ENCODE measurements at regions of chr5 and their contacts with region 1.

Region 1: GRCh38 chr5:64074533-64074932 is 91.1 kb upstream of the RNF180 start:
- DNase-seq: no peak
- H3K4me3 Mint-ChIP-seq: no peak overlapping the region
- H3K27ac Mint-ChIP-seq: no peak overlapping the region
- H3K4me1 Mint-ChIP-seq: no peaks in the 10 kb centered on the region
- H3K27me3 Mint-ChIP-seq: no peaks in the 10 kb centered on the region

Region 2: GRCh38 chr5:64063518-64063917 is 11.0 kb before region 1 on chr5:
- intact Hi-C with region 1: no loop called
- DNase-seq: no peak
- H3K4me3 Mint-ChIP-seq: no peak overlapping the region
- H3K27ac Mint-ChIP-seq: no peak overlapping the region
- H3K4me1 Mint-ChIP-seq: no peaks in the 10 kb centered on the region
- H3K27me3 Mint-ChIP-seq: no peaks in the 10 kb centered on the region

Region 3: GRCh38 chr5:64108675-64109074 is 34.1 kb after region 1 on chr5:
- intact Hi-C with region 1: no loop called
- DNase-seq: no peak
- H3K4me3 Mint-ChIP-seq: no peak overlapping the region
- H3K27ac Mint-ChIP-seq: no peak overlapping the region
- H3K4me1 Mint-ChIP-seq: no peaks in the 10 kb centered on the region
- H3K27me3 Mint-ChIP-seq: no peaks in the 10 kb centered on the region

Region 4: DNA sequence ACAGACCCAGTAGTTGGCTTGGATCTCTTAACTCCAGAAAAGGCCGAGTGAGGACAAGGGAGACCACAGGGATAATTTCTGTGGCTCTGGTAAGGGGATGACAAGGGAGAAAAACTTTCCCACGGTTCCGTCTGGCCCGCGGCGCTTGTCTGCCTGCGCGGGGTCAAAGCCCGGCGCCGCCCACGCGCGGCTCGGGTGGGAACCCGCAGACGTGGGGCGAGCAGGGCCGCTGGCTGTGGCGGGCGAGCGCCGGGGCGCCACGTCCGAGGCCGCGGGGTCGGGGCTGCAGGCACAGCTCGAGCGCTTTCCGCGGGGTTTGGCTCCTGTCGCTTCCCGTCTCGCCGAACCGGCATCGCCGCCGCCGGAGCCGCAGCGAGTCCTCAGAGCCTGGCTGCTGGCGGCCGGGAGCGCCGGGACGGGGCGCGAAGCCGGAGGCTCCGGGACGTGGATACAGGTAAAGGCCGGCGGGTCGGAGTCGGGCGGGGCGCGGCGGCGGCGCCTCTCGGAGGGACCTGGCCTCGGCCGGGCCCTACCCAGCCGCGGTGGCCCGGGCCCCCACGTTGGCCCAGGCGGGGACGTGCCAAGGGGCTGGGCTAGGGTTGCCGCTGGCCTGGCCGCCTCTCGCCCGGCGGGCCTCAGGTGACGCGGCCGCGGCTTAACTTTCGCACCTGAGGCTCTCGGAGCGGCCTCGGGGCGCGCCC is 91.1 kb after region 1 on chr5 and contains the start of gene RNF180:
- intact Hi-C with region 1: no loop called
- DNase-seq: no peak
- H3K4me3 Mint-ChIP-seq: peak within 1 kb of the TSS; percentile 19
- H3K27ac Mint-ChIP-seq: no peak within 1 kb of the TSS
- H3K4me1 Mint-ChIP-seq: no peaks in the 10 kb centered on the region
- H3K27me3 Mint-ChIP-seq: peaks cover 27% of the 10 kb centered on the region
- total RNA-seq, gene RNF180: not detected in 2 replicates

Region 5: DNA sequence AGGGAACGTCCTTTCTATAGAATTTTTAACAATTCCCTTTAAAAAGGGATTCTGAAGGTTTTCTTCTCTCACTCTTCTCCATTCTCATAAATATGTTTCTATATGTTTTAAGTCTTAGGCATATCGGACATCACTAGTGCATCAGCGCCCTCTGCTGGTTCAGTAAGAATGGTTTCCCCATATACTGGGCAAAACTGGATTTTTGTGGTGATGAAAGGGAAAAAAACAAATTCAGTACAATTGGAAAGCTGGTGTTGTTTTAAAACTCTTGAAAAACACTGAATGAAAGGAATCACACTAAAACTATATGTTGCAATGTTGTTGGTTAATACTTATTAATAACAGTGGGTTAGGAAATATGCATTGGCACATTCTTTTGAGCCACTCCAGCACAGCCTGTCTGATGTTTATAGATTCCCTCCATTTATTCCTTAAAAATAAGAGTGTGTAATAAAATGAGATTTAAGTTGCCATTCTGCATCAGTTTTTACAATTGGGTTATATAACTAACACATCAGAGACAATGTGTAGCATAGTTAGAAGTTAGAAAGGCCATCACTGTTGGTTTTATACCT is 710.0 kb after region 1 on chr5:
- intact Hi-C with region 1: loop called (anchors 5 kb)
- DNase-seq: peak; percentile 49
- H3K4me3 Mint-ChIP-seq: no peak overlapping the region
- H3K27ac Mint-ChIP-seq: no peak overlapping the region
- H3K4me1 Mint-ChIP-seq: peaks cover 5% of the 10 kb centered on the region
- H3K27me3 Mint-ChIP-seq: no peaks in the 10 kb centered on the region

Region 6: DNA sequence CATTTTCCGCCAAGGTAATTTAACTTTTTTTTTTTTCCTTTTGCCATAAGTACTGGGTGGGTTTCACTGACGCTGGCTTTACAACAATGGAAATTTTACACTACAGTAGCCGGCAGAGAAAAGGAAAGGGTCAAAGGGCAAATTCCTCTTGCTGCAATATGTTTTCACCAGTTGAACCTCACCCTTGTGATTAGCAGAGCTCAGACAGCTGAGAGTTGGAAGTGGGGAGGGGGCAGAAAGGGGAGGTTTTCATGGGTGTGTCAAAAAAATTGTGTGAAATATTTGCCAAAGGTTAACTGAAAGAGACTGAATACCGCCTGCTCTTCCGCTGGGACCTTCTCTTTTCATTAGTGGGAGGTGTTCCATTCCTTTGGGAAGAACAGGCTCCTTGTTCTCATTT is 1110.2 kb after region 1 on chr5:
- intact Hi-C with region 1: no loop called
- DNase-seq: no peak
- H3K4me3 Mint-ChIP-seq: no peak overlapping the region
- H3K27ac Mint-ChIP-seq: no peak overlapping the region
- H3K4me1 Mint-ChIP-seq: no peaks in the 10 kb centered on the region
- H3K27me3 Mint-ChIP-seq: peaks cover 3% of the 10 kb centered on the region